ENCODE measurements at regions of chr6 and their contacts with region 1.

Region 1: GRCh38 chr6:90413867-90414266 is 117.2 kb upstream of the BACH2 start:
- DNase-seq: peak; percentile 95
- ATAC-seq: peak; percentile 77
- H3K4me3 Mint-ChIP-seq: peak overlapping the region; percentile 60
- H3K27ac Mint-ChIP-seq: peak overlapping the region; percentile 95
- H3K4me1 Mint-ChIP-seq: peaks cover 61% of the 10 kb centered on the region
- H3K27me3 Mint-ChIP-seq: no peaks in the 10 kb centered on the region
- CTCF ChIP-seq: no peak

Region 2: DNA sequence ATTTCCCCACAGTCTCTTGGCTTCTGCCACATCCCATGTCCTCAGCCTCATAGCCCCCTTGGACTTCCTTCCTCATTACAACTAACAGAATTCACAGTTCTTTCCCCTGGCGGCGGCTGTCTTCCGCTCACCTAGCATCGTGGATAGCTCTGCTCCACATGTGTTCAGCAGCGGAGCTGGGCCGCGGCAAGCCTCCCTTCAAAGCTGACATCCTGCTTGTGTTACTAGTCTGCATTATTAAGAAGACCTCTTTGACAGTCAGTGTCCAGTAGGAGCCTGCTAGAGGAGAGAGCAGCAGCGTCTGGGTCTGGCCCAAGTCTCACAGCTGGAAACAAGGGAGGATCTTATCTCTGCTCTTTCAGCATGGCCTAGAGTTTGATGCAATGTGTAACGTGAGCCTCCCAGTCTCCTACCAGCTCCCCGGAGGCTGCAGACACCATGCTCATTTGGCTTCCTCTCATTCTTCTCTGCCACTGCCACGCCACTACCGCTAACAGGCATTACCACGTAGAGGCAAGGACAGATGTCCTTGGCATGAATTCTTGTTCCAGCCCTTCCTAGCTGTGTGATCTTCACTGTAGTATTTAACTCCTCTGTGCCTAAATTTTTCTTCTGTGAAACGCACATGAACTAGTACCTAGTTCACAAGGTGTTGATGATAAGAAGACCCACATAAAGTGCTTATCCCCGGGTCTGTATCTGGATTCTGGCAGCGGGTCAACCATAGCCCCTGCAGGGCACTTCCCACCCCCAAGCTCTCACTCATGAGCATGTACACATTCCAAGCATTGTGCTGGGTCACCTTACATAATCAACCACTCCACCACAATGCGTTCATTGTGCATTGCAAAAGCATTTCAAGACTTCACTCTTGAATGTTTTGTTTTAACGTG is 10.1 kb before region 1 on chr6:
- CTCF ChIA-PET with region 1: interaction called, 34 read pairs
- POLR2A ChIA-PET with region 1: interaction called, 11 read pairs
- intact Hi-C with region 1: loop called (anchors 1 kb)
- DNase-seq: no peak
- ATAC-seq: no peak
- H3K4me3 Mint-ChIP-seq: no peak overlapping the region
- H3K27ac Mint-ChIP-seq: peak overlapping the region; percentile 79
- H3K4me1 Mint-ChIP-seq: peaks cover 65% of the 10 kb centered on the region
- H3K27me3 Mint-ChIP-seq: no peaks in the 10 kb centered on the region
- CTCF ChIP-seq: no peak

Region 3: DNA sequence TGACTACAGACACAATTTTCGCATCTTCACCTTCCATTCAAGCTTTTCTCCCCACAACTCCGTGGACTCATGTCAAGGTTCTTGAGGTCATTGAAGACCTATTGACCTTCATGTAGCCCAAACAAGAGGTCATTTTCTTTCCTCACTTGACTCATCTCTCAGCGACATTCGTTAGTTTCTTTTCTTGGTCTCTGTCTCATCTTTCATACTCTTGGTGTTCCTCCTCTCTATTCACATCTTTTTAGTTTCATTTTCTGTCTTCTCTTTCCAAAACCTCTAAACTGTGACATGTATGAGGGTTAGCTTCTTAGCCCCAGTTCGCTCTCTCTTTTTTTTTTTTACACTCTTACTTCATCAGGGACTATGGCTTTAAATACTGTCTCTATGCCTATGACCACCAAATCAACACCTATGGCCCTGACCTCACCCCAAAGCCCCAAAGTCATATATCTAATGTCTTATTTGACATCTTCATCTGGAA is 11.3 kb after region 1 on chr6:
- CTCF ChIA-PET with region 1: interaction called, 22 read pairs
- POLR2A ChIA-PET with region 1: interaction called, 34 read pairs
- intact Hi-C with region 1: no loop called
- DNase-seq: peak; percentile 64
- ATAC-seq: peak; percentile 96
- H3K4me3 Mint-ChIP-seq: peak overlapping the region; percentile 52
- H3K27ac Mint-ChIP-seq: peak overlapping the region; percentile 91
- H3K4me1 Mint-ChIP-seq: peaks cover 25% of the 10 kb centered on the region
- H3K27me3 Mint-ChIP-seq: no peaks in the 10 kb centered on the region
- CTCF ChIP-seq: no peak

Region 4: GRCh38 chr6:90458353-90459224 is 44.7 kb after region 1 on chr6:
- CTCF ChIA-PET with region 1: interaction called, 4 read pairs
- POLR2A ChIA-PET with region 1: interaction called, 4 read pairs
- intact Hi-C with region 1: loop called (anchors 5 kb)
- DNase-seq: peak; percentile 93
- ATAC-seq: peak; percentile 95
- H3K4me3 Mint-ChIP-seq: peak overlapping the region; percentile 31
- H3K27ac Mint-ChIP-seq: peak overlapping the region; percentile 93
- H3K4me1 Mint-ChIP-seq: peaks cover 74% of the 10 kb centered on the region
- H3K27me3 Mint-ChIP-seq: no peaks in the 10 kb centered on the region
- CTCF ChIP-seq: no peak

Region 5: GRCh38 chr6:90472744-90473143 is 58.9 kb after region 1 on chr6:
- CTCF ChIA-PET with region 1: interaction called, 8 read pairs
- POLR2A ChIA-PET with region 1: interaction called, 10 read pairs
- intact Hi-C with region 1: no loop called
- DNase-seq: peak; percentile 64
- ATAC-seq: peak; percentile 18
- H3K4me3 Mint-ChIP-seq: peak overlapping the region; percentile 7
- H3K27ac Mint-ChIP-seq: peak overlapping the region; percentile 88
- H3K4me1 Mint-ChIP-seq: peaks cover 78% of the 10 kb centered on the region
- H3K27me3 Mint-ChIP-seq: no peaks in the 10 kb centered on the region
- CTCF ChIP-seq: no peak